ENCODE measurements at regions of chr19 and their contacts with region 1.

Region 1: DNA sequence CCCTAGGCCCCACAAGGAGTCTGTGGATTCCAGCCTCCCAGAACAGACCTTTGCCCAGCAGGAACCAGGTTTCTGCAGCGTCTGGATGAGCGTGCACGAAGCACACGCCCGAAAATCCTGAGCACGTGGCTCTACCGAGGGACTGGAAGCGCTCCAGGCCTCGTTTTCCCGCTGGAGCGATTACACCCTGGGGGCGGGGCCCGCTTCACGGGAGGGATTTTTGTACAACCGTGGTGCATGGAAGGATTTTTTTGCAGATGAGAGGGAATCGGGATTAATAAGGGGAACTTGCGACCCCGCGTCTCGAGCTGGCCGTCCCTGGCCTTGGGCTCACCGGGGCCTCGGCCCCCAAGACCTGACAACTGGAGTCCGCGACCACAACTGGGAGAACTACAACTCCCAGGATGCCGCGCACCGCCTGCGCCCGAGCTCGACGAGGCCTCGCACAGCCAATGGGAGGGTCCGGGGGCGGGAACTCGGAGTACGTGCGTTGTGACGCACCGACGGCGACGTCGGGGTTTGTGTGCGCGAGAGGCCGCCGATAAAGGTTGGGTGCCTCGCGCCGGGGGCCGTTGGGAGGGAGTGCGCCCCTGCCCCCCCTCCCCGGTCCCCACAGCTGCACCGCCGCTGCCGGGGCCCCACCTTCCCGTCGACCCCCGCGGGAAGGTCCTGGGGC is at the start of gene ZNF628:
- DNase-seq: peak; percentile 97
- ATAC-seq: peak; percentile 90
- H3K4me3 Mint-ChIP-seq: peak within 1 kb of the TSS; percentile 91
- H3K27ac Mint-ChIP-seq: peak within 1 kb of the TSS; percentile 89
- H3K4me1 Mint-ChIP-seq: peaks cover 33% of the 10 kb centered on the region
- H3K27me3 Mint-ChIP-seq: no peaks in the 10 kb centered on the region
- CTCF ChIP-seq: no peak
- total RNA-seq, gene ZNF628: 10.4 and 12.7 TPM in 2 replicates

Region 2: DNA sequence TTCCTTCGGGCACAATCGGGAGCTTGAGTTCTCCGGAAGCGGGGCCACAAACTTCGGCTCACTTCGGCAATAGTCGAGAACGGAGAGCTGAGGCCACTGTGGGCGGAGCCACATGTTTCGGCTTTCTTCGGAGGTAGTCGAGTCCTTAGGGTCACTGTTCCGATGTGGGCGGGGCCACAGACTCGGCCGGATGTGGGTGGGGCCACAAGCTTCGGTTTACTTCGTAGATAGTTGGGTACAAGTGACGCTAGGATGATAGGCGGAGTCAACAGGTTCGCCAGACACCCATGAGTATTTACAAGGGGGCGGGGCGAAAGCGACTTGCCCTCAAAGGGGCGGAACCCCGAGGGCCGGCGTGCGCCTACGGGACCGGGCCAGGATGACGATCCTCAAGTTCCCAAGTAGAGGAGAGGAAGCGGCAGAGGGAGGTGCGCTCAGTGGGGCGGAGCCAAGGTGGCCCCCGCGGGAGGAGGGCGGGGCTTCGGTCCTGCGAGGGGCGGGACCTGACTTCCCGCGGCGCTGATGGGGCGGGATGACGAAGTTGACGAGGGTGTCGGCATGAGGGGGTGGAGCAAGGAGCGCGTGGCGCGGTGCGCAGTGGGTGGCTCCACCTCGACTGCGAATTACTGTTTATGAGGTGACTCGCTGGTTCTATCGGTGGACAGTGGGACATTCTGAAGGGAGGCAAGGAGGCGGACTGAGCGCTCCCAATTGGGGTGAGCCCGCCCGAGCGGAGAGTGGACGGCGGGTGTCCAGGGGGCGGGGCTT is 1286.3 kb before region 1 on chr19:
- CTCF ChIA-PET with region 1: no interaction called
- POLR2A ChIA-PET with region 1: interaction called, 10 read pairs
- intact Hi-C with region 1: no loop called
- DNase-seq: peak; percentile 99
- ATAC-seq: peak; percentile 57
- H3K4me3 Mint-ChIP-seq: peak overlapping the region; percentile 90
- H3K27ac Mint-ChIP-seq: peak overlapping the region; percentile 98
- H3K4me1 Mint-ChIP-seq: peaks cover 35% of the 10 kb centered on the region
- H3K27me3 Mint-ChIP-seq: no peaks in the 10 kb centered on the region
- CTCF ChIP-seq: no peak

Region 3: DNA sequence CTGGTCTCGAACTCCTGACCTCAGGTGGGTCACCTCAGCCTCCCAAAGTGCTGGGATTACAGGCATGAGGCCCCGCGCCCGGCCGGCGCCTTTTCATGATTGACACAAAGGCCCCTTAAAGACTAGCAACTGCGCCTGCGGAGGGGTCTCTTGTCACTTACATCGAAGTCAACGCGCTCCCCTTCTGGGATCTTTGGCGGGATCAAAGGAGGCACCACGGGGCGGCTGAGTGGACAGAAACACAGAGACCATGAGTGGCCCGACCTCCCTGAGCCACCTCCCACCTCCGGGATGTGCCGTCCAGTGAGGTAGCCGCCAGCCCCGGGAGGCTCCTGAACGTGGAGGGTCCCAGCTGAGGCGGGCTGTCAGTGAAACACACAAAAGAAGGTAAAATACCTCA is 334.5 kb before region 1 on chr19:
- CTCF ChIA-PET with region 1: no interaction called
- POLR2A ChIA-PET with region 1: interaction called, 13 read pairs
- intact Hi-C with region 1: no loop called
- DNase-seq: no peak
- ATAC-seq: no peak
- H3K4me3 Mint-ChIP-seq: no peak overlapping the region
- H3K27ac Mint-ChIP-seq: no peak overlapping the region
- H3K4me1 Mint-ChIP-seq: peaks cover 6% of the 10 kb centered on the region
- H3K27me3 Mint-ChIP-seq: peaks cover 51% of the 10 kb centered on the region
- CTCF ChIP-seq: no peak

Region 4: DNA sequence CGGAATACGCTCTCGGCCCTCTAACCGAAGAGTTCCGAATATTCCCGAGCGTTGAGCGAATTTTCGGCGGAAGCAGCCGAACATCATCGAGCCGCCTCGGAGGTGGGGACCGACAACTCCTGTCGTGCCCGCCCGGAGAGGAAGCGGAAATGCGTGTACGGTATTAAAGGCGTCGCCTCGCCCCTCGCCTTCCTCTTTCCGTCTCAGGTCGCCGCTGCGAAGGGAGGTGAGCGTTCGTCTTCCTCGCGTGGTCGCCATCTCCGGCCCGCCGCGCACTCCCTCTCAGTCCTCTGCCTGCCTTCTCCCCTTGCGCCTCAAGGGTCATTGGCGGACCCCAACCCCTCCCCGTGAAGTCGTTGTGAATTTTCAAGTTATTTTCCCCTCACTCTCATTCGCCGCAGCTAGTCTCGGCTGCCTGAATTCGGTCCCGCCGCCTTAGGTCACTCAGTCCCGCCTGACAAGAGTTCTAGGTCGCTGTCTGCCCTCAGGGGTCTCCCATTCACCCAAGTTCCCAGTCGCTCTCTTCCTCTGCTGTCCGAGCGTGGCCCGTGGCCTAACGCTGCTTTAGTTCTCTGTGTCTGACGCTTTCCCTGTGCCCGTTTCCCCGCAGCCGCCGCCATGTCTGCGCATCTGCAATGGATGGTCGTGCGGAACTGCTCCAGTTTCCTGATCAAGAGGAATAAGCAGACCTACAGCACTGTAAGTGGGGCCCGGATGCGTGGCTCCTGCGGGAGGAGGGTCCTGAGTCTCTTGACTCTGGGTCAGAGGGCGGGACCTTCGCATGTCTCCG is 90.3 kb before region 1 on chr19 and contains the start of gene RPL28:
- CTCF ChIA-PET with region 1: no interaction called
- POLR2A ChIA-PET with region 1: interaction called, 6 read pairs
- intact Hi-C with region 1: loop called (anchors 1 kb)
- DNase-seq: peak; percentile 95
- ATAC-seq: peak; percentile 79
- H3K4me3 Mint-ChIP-seq: peak within 1 kb of the TSS; percentile 100
- H3K27ac Mint-ChIP-seq: peak within 1 kb of the TSS; percentile 99
- H3K4me1 Mint-ChIP-seq: peaks cover 67% of the 10 kb centered on the region
- H3K27me3 Mint-ChIP-seq: no peaks in the 10 kb centered on the region
- CTCF ChIP-seq: no peak
- total RNA-seq, gene RPL28: 3,790 and 4,042 TPM in 2 replicates

Region 5: GRCh38 chr19:55494172-55494761 is 18.0 kb after region 1 on chr19:
- CTCF ChIA-PET with region 1: no interaction called
- POLR2A ChIA-PET with region 1: no interaction called
- intact Hi-C with region 1: no loop called
- DNase-seq: no peak
- ATAC-seq: no peak
- H3K4me3 Mint-ChIP-seq: no peak overlapping the region
- H3K27ac Mint-ChIP-seq: no peak overlapping the region
- H3K4me1 Mint-ChIP-seq: no peaks in the 10 kb centered on the region
- H3K27me3 Mint-ChIP-seq: peaks cover 9% of the 10 kb centered on the region
- CTCF ChIP-seq: no peak

Region 6: GRCh38 chr19:55536951-55537740 is 60.9 kb after region 1 on chr19 and contains the start of gene SBK2:
- CTCF ChIA-PET with region 1: no interaction called
- POLR2A ChIA-PET with region 1: no interaction called
- intact Hi-C with region 1: no loop called
- DNase-seq: no peak
- ATAC-seq: no peak
- H3K4me3 Mint-ChIP-seq: no peak within 1 kb of the TSS
- H3K27ac Mint-ChIP-seq: no peak within 1 kb of the TSS
- H3K4me1 Mint-ChIP-seq: no peaks in the 10 kb centered on the region
- H3K27me3 Mint-ChIP-seq: peaks cover 3% of the 10 kb centered on the region
- CTCF ChIP-seq: no peak
- total RNA-seq, gene SBK2: not detected in 2 replicates

Region 7: GRCh38 chr19:55599468-55600279 is 123.4 kb after region 1 on chr19 and contains the start of gene FIZ1:
- CTCF ChIA-PET with region 1: no interaction called
- POLR2A ChIA-PET with region 1: interaction called, 23 read pairs
- intact Hi-C with region 1: loop called (anchors 1 kb)
- DNase-seq: peak; percentile 92
- ATAC-seq: peak; percentile 69
- H3K4me3 Mint-ChIP-seq: peak within 1 kb of the TSS; percentile 99
- H3K27ac Mint-ChIP-seq: peak within 1 kb of the TSS; percentile 99
- H3K4me1 Mint-ChIP-seq: peaks cover 19% of the 10 kb centered on the region
- H3K27me3 Mint-ChIP-seq: no peaks in the 10 kb centered on the region
- CTCF ChIP-seq: no peak
- total RNA-seq, gene FIZ1: 17.5 and 21.2 TPM in 2 replicates

Region 8: GRCh38 chr19:55643348-55644176 is 167.3 kb after region 1 on chr19 and contains the start of gene ZNF581:
- CTCF ChIA-PET with region 1: no interaction called
- POLR2A ChIA-PET with region 1: interaction called, 10 read pairs
- intact Hi-C with region 1: no loop called
- DNase-seq: peak; percentile 84
- ATAC-seq: peak; percentile 51
- H3K4me3 Mint-ChIP-seq: peak within 1 kb of the TSS; percentile 86
- H3K27ac Mint-ChIP-seq: peak within 1 kb of the TSS; percentile 96
- H3K4me1 Mint-ChIP-seq: peaks cover 66% of the 10 kb centered on the region
- H3K27me3 Mint-ChIP-seq: no peaks in the 10 kb centered on the region
- CTCF ChIP-seq: no peak
- total RNA-seq, gene ZNF581: 42.7 and 46.5 TPM in 2 replicates

Measured in activated B cell treated with CpG ODN at 0.5 μM for 24 hours (primary cell).